Caco-2 (cell line): ENCODE measurements at regions of chr17 and their contacts with region 1.

Region 1: GRCh38 chr17:73092523-73093135 is at the start of gene SLC39A11:
- DNase-seq: peak; percentile 94 to 95
- H3K4me3 ChIP-seq: peak within 1 kb of the TSS; percentile 66
- H3K4me3 Mint-ChIP-seq: peak within 1 kb of the TSS; percentile 93
- H3K27ac Mint-ChIP-seq: peak within 1 kb of the TSS; percentile 82
- H3K4me1 ChIP-seq: 0 out of 2 replicates have a peak, but pooled peaks cover 5% of the 10 kb centered on the region
- H3K4me1 Mint-ChIP-seq: no peaks in the 10 kb centered on the region
- H3K27me3 ChIP-seq: no peaks in the 10 kb centered on the region
- H3K27me3 Mint-ChIP-seq: no peaks in the 10 kb centered on the region
- CTCF ChIP-seq: no peak
- total RNA-seq, gene SLC39A11: 24.9 and 26.4 TPM in 2 replicates

Region 2: GRCh38 chr17:72872396-72872795 is 220.2 kb before region 1 on chr17:
- CTCF ChIA-PET with region 1: no interaction called
- POLR2A ChIA-PET with region 1: no interaction called
- intact Hi-C with region 1: no loop called
- DNase-seq: no peak
- H3K4me3 ChIP-seq: no peak overlapping the region
- H3K4me3 Mint-ChIP-seq: no peak overlapping the region
- H3K27ac Mint-ChIP-seq: no peak overlapping the region
- H3K4me1 ChIP-seq: no peaks in the 10 kb centered on the region
- H3K4me1 Mint-ChIP-seq: no peaks in the 10 kb centered on the region
- H3K27me3 ChIP-seq: no peaks in the 10 kb centered on the region
- H3K27me3 Mint-ChIP-seq: no peaks in the 10 kb centered on the region
- CTCF ChIP-seq: no peak

Region 3: GRCh38 chr17:72985881-72986720 is 106.5 kb before region 1 on chr17:
- CTCF ChIA-PET with region 1: interaction called, 4 read pairs
- POLR2A ChIA-PET with region 1: no interaction called
- intact Hi-C with region 1: loop called (anchors 5 kb)
- DNase-seq: peak; percentile 74 to 86
- H3K4me3 ChIP-seq: no peak overlapping the region
- H3K4me3 Mint-ChIP-seq: no peak overlapping the region
- H3K27ac Mint-ChIP-seq: no peak overlapping the region
- H3K4me1 ChIP-seq: no peaks in the 10 kb centered on the region
- H3K4me1 Mint-ChIP-seq: no peaks in the 10 kb centered on the region
- H3K27me3 ChIP-seq: no peaks in the 10 kb centered on the region
- H3K27me3 Mint-ChIP-seq: no peaks in the 10 kb centered on the region
- CTCF ChIP-seq: peak; percentile 89 to 93

Region 4: DNA sequence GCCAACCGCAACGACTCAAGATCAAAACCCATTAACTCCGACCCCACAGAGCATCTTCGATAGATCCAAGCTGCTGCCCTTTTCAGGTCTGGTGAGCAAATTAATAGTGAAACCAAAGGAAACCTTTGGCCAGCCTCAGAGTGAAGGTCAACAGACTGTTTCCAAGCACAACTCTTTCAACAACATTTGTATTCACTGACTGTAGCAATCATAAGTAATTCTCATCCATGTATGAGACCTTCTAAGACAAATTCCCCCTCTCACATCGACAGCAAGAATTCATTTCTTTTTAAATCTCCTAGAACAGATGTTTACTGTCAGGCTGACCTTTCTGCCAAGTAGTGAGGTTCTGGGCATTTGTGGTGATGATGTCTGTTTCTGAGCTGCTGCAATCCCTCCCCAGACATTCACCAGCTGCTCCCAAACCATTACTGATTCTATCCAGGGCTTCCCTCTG is 64.3 kb before region 1 on chr17:
- CTCF ChIA-PET with region 1: no interaction called
- POLR2A ChIA-PET with region 1: no interaction called
- intact Hi-C with region 1: no loop called
- DNase-seq: no peak
- H3K4me3 ChIP-seq: no peak overlapping the region
- H3K4me3 Mint-ChIP-seq: no peak overlapping the region
- H3K27ac Mint-ChIP-seq: no peak overlapping the region
- H3K4me1 ChIP-seq: no peaks in the 10 kb centered on the region
- H3K4me1 Mint-ChIP-seq: no peaks in the 10 kb centered on the region
- H3K27me3 ChIP-seq: no peaks in the 10 kb centered on the region
- H3K27me3 Mint-ChIP-seq: no peaks in the 10 kb centered on the region
- CTCF ChIP-seq: no peak

Region 5: GRCh38 chr17:73045724-73046123 is 46.9 kb before region 1 on chr17:
- CTCF ChIA-PET with region 1: no interaction called
- POLR2A ChIA-PET with region 1: no interaction called
- intact Hi-C with region 1: no loop called
- DNase-seq: no peak
- H3K4me3 ChIP-seq: no peak overlapping the region
- H3K4me3 Mint-ChIP-seq: no peak overlapping the region
- H3K27ac Mint-ChIP-seq: no peak overlapping the region
- H3K4me1 ChIP-seq: no peaks in the 10 kb centered on the region
- H3K4me1 Mint-ChIP-seq: no peaks in the 10 kb centered on the region
- H3K27me3 ChIP-seq: no peaks in the 10 kb centered on the region
- H3K27me3 Mint-ChIP-seq: no peaks in the 10 kb centered on the region
- CTCF ChIP-seq: no peak

Region 6: DNA sequence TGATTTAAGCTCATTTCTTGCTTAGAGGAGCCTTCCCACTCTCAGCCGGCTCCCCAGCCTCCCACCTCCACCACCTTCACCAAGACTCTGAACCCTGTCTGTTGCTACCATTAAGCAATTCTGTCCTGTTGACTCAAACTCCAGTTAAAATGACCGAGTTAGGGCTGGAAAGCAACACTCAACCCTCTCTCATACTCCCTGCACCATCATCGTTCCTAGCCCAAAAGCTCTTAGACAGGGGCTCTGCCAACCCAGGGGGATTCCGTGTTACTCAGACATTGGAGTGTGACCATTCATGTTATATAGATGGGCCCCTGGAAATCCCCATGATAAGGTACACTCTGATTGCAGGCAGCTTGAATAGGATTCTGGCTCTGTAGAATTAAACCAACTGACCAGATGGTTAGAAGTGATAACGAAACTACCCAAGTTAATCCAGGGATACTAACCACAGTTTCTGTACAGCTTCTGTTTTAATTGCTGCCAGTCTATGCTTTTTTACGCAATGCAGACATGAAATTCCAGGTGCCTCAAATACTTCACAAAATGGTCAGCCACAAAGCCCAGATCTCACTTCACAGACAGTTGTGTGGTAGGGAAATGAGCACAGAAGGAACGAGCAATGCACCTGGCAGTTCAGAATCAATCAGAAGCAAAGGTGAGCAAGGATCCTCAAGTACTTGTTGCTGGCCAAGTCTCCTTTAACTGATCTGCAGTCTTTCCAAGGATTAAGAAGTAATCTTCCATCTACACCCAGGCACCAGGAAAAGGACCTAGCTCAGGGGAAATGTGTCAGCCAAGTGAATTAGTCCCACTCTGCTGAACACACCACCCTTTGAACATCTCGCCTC is 74.3 kb after region 1 on chr17:
- CTCF ChIA-PET with region 1: no interaction called
- POLR2A ChIA-PET with region 1: no interaction called
- intact Hi-C with region 1: loop called (anchors 10 kb)
- DNase-seq: no peak
- H3K4me3 ChIP-seq: no peak overlapping the region
- H3K4me3 Mint-ChIP-seq: peak overlapping the region; percentile 83
- H3K27ac Mint-ChIP-seq: no peak overlapping the region
- H3K4me1 ChIP-seq: peaks cover 6% of the 10 kb centered on the region; the same call in 1 of the 2 replicates
- H3K4me1 Mint-ChIP-seq: peaks cover 13% of the 10 kb centered on the region
- H3K27me3 ChIP-seq: peaks cover 8% of the 10 kb centered on the region
- H3K27me3 Mint-ChIP-seq: peaks cover 20% of the 10 kb centered on the region
- CTCF ChIP-seq: no peak